Activated CD4-positive, alpha-beta memory T cell treated with anti-CD3 and anti-CD28 coated beads, Interleukin-2, amount 10 ng/mL, durations not matched to agents 7 days and 5 days (primary cell): ENCODE measurements at regions of chr17 and their contacts with region 1.

Region 1: GRCh38 chr17:42388381-42389134 is at the start of gene STAT3:
- DNase-seq: peak; percentile 100
- H3K4me3 Mint-ChIP-seq: peak within 1 kb of the TSS; percentile 90
- H3K27ac Mint-ChIP-seq: peak within 1 kb of the TSS; percentile 98
- H3K4me1 Mint-ChIP-seq: peaks cover 46% of the 10 kb centered on the region
- H3K27me3 Mint-ChIP-seq: no peaks in the 10 kb centered on the region
- total RNA-seq, gene STAT3: 130 to 135 TPM

Region 2: GRCh38 chr17:42312285-42313130 is 76.0 kb before region 1 on chr17:
- CTCF ChIA-PET with region 1: interaction called, 7 read pairs
- POLR2A ChIA-PET with region 1: interaction called, 13 read pairs
- DNase-seq: peak; percentile 80
- H3K4me3 Mint-ChIP-seq: no peak overlapping the region
- H3K27ac Mint-ChIP-seq: peak overlapping the region; percentile 6
- H3K4me1 Mint-ChIP-seq: peaks cover 59% of the 10 kb centered on the region
- H3K27me3 Mint-ChIP-seq: no peaks in the 10 kb centered on the region

Region 3: GRCh38 chr17:42347606-42348005 is 41.0 kb before region 1 on chr17:
- CTCF ChIA-PET with region 1: no interaction called
- POLR2A ChIA-PET with region 1: interaction called, 12 read pairs
- DNase-seq: no peak
- H3K4me3 Mint-ChIP-seq: no peak overlapping the region
- H3K27ac Mint-ChIP-seq: no peak overlapping the region
- H3K4me1 Mint-ChIP-seq: peaks cover 30% of the 10 kb centered on the region
- H3K27me3 Mint-ChIP-seq: no peaks in the 10 kb centered on the region

Region 4: GRCh38 chr17:42405963-42406495 is 17.5 kb after region 1 on chr17:
- CTCF ChIA-PET with region 1: interaction called, 15 read pairs
- POLR2A ChIA-PET with region 1: interaction called, 15 read pairs
- DNase-seq: peak; percentile 82
- H3K4me3 Mint-ChIP-seq: no peak overlapping the region
- H3K27ac Mint-ChIP-seq: no peak overlapping the region
- H3K4me1 Mint-ChIP-seq: peaks cover 10% of the 10 kb centered on the region
- H3K27me3 Mint-ChIP-seq: peaks cover 23% of the 10 kb centered on the region

Region 5: DNA sequence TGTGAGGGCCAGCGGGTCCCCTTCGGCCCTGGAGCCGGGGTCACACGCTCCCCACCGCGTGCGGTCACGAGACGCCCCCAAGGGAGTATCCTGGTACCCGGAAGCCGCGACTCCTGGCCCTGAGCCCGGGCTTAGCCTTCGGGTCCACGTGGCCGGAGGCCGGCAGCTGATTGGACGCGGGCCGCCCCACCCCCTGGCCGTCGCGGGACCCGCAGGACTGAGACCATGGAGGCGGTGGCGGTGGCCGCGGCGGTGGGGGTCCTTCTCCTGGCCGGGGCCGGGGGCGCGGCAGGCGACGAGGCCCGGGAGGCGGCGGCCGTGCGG is 147.5 kb after region 1 on chr17 and contains the start of gene NAGLU:
- CTCF ChIA-PET with region 1: interaction called, 3 read pairs
- POLR2A ChIA-PET with region 1: interaction called, 12 read pairs
- DNase-seq: peak; percentile 89
- H3K4me3 Mint-ChIP-seq: peak within 1 kb of the TSS; percentile 82
- H3K27ac Mint-ChIP-seq: peak within 1 kb of the TSS; percentile 75
- H3K4me1 Mint-ChIP-seq: peaks cover 42% of the 10 kb centered on the region
- H3K27me3 Mint-ChIP-seq: peaks cover 12% of the 10 kb centered on the region
- total RNA-seq, gene NAGLU: 15.9 to 17.5 TPM